Mammary epithelial cell (primary cell): ENCODE measurements at regions of chr5 and their contacts with region 1.

Region 1: DNA sequence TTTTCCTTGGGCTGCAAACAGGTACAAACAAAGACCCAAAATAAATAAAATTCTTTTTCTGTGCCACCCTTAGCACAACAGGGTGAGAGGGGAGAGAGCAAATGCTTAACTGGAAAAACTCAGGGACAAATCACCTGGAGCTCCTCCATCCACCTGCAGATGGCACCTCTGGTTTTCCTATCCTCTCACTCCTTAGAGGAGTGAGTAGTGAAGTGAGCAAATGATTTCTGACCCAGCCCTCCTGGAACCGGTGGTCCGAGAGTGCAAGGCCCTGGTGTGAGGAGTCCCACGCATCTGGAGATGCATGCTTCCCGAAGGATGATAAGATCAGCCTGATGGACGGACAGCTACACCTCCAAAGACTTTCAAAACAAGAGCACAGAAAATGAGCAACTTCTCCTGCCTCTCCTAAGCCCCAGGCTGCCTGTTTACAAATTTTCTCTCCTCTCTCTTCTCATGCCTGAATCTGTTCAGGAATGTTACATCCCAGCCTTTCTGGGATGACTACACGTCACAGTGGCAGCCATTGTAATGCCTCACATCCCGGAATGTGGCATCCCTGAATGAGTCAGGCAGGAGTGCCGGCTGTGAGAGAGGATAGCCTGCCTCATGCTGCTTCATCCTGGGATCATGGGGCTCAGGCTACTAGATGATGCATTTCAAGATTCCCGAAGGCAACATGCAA is 86.4 kb downstream of the ADRB2 start:
- DNase-seq: peak; percentile 100
- H3K4me3 ChIP-seq: no peak overlapping the region
- H3K27ac ChIP-seq: peak overlapping the region; percentile 100
- H3K4me1 ChIP-seq: peaks cover 66% of the 10 kb centered on the region
- H3K27me3 ChIP-seq: no peaks in the 10 kb centered on the region
- CTCF ChIP-seq: peak; percentile 44 to 70

Region 2: GRCh38 chr5:148826053-148826738 is 86.7 kb before region 1 on chr5 and contains the start of gene ADRB2:
- CTCF ChIA-PET with region 1: no interaction called
- dilution Hi-C with region 1: loop called (anchors 5 kb)
- in situ Hi-C with region 1: loop called in 1 of 2 experiments (anchors 5 kb)
- intact Hi-C with region 1: loop called (anchors 1 kb)
- DNase-seq: peak; percentile 99
- H3K4me3 ChIP-seq: peak within 1 kb of the TSS; percentile 69 to 81 (median 81)
- H3K27ac ChIP-seq: peak within 1 kb of the TSS; percentile 76
- H3K4me1 ChIP-seq: peaks cover 33% of the 10 kb centered on the region
- H3K27me3 ChIP-seq: no peaks in the 10 kb centered on the region
- CTCF ChIP-seq: peak in 1 of 2 donors; percentile 23
- total RNA-seq, gene ADRB2: 4.8 to 14.8 TPM

Region 3: DNA sequence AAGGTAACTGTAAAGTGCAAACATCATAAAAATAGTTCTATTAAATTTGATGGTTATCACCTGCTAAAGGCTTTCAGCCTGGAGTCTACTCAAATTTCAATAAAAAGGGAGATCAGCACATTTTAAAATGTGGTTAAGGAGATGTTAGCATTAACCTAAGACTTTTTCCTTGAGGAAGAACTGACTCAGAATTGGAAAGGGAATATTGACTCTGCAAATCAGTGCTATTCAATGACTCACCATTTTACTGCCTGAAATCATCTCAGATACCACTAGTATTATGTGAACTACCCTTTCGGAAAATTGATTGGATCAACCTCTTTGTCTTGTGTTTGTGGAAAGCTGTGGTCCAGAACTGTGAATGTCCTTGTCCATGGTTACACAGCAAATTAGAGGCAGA is 26.8 kb after region 1 on chr5:
- CTCF ChIA-PET with region 1: no interaction called
- dilution Hi-C with region 1: no loop called
- in situ Hi-C with region 1: no loop called
- intact Hi-C with region 1: loop called (anchors 2 kb)
- DNase-seq: peak; percentile 58
- H3K4me3 ChIP-seq: no peak overlapping the region
- H3K27ac ChIP-seq: peak overlapping the region; percentile 81
- H3K4me1 ChIP-seq: peaks cover 39% of the 10 kb centered on the region
- H3K27me3 ChIP-seq: no peaks in the 10 kb centered on the region
- CTCF ChIP-seq: no peak

Region 4: GRCh38 chr5:148963664-148964063 is 50.8 kb after region 1 on chr5:
- CTCF ChIA-PET with region 1: no interaction called
- dilution Hi-C with region 1: no loop called
- in situ Hi-C with region 1: loop called in 1 of 2 experiments (anchors 5 kb)
- intact Hi-C with region 1: loop called (anchors 2 kb)
- DNase-seq: no peak
- H3K4me3 ChIP-seq: no peak overlapping the region
- H3K27ac ChIP-seq: no peak overlapping the region
- H3K4me1 ChIP-seq: peaks cover 28% of the 10 kb centered on the region
- H3K27me3 ChIP-seq: no peaks in the 10 kb centered on the region
- CTCF ChIP-seq: no peak

Region 5: DNA sequence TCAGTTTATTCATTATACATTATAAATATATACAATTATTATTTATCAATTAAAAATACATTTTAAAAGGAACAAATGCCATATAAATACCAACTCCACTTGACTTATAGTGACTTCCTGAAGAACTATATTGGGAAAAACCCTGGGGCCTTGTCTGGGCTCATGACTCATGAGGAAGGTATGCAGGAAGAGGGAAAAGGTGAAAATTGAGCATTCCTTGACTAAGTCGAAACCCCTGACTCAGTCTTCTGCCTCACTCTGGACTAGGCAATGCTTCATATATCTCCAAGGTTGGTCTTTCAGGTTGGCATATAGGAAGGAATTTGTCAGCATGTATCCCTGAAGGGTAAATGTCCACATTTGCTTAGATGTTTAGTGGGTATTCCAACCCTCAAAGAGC is 71.5 kb after region 1 on chr5:
- CTCF ChIA-PET with region 1: interaction called, 3 read pairs
- dilution Hi-C with region 1: loop called (anchors 5 kb)
- in situ Hi-C with region 1: loop called in 1 of 2 experiments (anchors 5 kb)
- intact Hi-C with region 1: loop called (anchors 1 kb)
- DNase-seq: peak; percentile 94
- H3K4me3 ChIP-seq: no peak overlapping the region
- H3K27ac ChIP-seq: peak overlapping the region; percentile 100
- H3K4me1 ChIP-seq: peaks cover 51% of the 10 kb centered on the region
- H3K27me3 ChIP-seq: no peaks in the 10 kb centered on the region
- CTCF ChIP-seq: no peak

Region 6: GRCh38 chr5:149035372-149035790 is 122.5 kb after region 1 on chr5:
- CTCF ChIA-PET with region 1: no interaction called
- dilution Hi-C with region 1: no loop called
- in situ Hi-C with region 1: no loop called
- intact Hi-C with region 1: loop called (anchors 1 kb)
- DNase-seq: peak; percentile 61
- H3K4me3 ChIP-seq: no peak overlapping the region
- H3K27ac ChIP-seq: no peak overlapping the region
- H3K4me1 ChIP-seq: peaks cover 25% of the 10 kb centered on the region
- H3K27me3 ChIP-seq: no peaks in the 10 kb centered on the region
- CTCF ChIP-seq: peak; percentile 88 to 90

Region 7: DNA sequence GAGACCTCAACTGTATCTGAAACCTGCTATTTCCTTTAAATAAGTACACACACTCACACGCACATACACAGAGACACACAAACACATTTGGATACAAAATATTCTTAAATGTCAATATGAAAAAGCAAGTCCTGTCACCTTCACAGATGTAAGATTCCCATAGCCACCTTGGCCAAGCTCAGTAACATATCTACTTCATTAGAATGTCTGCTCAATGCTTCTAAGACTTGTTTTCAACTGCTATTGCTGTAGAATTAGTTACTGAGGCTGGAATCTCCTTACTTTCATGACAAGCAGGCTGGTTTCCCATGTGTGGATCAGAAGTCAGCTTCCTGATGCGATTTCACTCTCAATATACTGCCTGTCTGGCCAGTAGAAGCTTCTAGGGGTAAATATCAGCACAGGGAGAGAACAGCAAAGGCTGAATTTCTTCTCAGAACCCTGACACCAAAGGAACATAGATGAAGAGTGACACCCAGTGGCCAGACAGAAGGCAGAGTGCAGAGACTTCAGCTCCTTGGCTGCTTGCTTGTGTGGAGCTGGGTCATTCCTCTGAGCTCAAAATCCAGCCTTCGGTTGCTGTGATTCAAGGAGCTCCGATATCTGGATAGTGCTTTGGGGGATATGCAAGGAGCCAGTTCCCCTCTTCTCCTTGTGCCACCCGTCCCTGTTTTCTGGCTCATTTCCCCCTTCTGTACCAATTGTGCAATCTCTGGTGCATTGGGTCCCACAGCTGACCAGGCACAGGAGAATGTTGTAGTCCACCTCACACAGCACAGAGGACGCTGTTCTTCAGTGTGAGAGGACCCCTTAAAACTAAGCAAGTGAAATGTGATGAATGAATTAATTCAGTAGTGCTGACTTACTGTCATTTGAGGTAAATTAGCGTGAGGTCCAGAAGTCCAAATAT is 201.8 kb after region 1 on chr5:
- CTCF ChIA-PET with region 1: interaction called, 5 read pairs
- dilution Hi-C with region 1: loop called (anchors 5 kb)
- in situ Hi-C with region 1: no loop called
- intact Hi-C with region 1: loop called (anchors 1 kb)
- DNase-seq: peak; percentile 77
- H3K4me3 ChIP-seq: no peak overlapping the region
- H3K27ac ChIP-seq: peak overlapping the region; percentile 65
- H3K4me1 ChIP-seq: peaks cover 24% of the 10 kb centered on the region
- H3K27me3 ChIP-seq: no peaks in the 10 kb centered on the region
- CTCF ChIP-seq: peak; percentile 88 to 95